Activated CD8-positive, alpha-beta T cell treated with anti-CD3 and anti-CD28 coated beads, Interleukin-2, amount 10 ng/mL, durations not matched to agents 7 days and 5 days (primary cell): ENCODE measurements at regions of chr11 and their contacts with region 1.

Region 1: DNA sequence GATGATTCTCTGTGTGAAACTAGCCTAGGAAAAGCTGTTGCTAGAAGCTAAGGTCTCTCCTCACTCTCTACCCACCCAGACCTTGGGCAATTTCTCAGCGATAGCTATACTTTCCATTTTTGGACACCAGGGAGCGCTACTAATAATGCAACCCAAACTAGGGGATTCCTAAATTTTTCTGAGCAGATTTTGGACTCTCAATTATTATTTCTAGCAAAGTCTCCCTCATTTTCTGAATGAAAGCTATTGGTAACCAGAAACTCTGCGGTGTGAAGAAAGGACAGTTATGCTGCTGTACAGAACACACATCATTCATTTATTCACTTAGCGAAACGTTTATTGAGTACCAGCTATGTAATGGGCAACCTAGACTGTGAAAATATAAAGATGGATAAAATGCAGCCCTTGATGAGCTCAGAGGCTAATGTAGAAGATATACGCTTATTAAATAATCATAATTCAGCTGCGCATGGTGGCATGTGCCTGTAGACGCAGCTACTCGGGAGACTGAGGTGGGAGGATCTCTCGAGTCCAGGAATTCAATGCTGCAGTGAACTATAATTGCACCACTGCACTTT is 6.1 kb upstream of the STIM1 start:
- DNase-seq: peak; percentile 68
- ATAC-seq: peak; percentile 61
- H3K4me3 Mint-ChIP-seq: no peak overlapping the region
- H3K27ac Mint-ChIP-seq: no peak overlapping the region
- H3K4me1 Mint-ChIP-seq: peaks cover 49% of the 10 kb centered on the region
- H3K27me3 Mint-ChIP-seq: no peaks in the 10 kb centered on the region

Region 2: GRCh38 chr11:3824714-3825472 is 24.5 kb before region 1 on chr11:
- CTCF ChIA-PET with region 1: interaction called, 458 read pairs
- POLR2A ChIA-PET with region 1: interaction called, 4 read pairs
- DNase-seq: peak; percentile 87
- ATAC-seq: peak; percentile 93
- H3K4me3 Mint-ChIP-seq: no peak overlapping the region
- H3K27ac Mint-ChIP-seq: peak overlapping the region; percentile 46
- H3K4me1 Mint-ChIP-seq: peaks cover 38% of the 10 kb centered on the region
- H3K27me3 Mint-ChIP-seq: no peaks in the 10 kb centered on the region

Region 3: GRCh38 chr11:3880724-3881123 is 31.3 kb after region 1 on chr11:
- CTCF ChIA-PET with region 1: interaction called, 27 read pairs
- POLR2A ChIA-PET with region 1: interaction called, 10 read pairs
- DNase-seq: no peak
- ATAC-seq: no peak
- H3K4me3 Mint-ChIP-seq: no peak overlapping the region
- H3K27ac Mint-ChIP-seq: peak overlapping the region; percentile 73
- H3K4me1 Mint-ChIP-seq: peaks cover 69% of the 10 kb centered on the region
- H3K27me3 Mint-ChIP-seq: no peaks in the 10 kb centered on the region

Region 4: DNA sequence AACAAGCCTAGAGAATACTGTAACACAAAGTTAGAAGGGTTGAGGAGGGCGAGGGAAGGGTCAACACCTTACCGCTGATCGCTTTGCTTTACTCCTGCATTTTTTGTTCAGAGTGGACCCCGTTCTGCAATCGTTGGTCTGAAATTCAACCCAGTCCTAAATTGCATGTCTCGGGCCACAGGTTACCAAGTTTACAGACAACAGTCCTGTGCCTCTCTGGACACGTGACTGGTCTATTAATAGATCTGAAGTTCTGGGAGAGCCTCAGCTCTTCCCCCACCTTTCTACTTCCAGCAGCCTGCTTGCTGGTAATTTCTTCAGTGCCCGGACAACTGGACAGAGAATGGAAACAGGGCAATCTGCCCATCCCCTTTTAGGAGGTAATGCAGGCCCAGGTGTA is 80.3 kb after region 1 on chr11:
- CTCF ChIA-PET with region 1: interaction called, 15 read pairs
- POLR2A ChIA-PET with region 1: interaction called, 3 read pairs
- DNase-seq: no peak
- ATAC-seq: no peak
- H3K4me3 Mint-ChIP-seq: no peak overlapping the region
- H3K27ac Mint-ChIP-seq: peak overlapping the region; percentile 18
- H3K4me1 Mint-ChIP-seq: peaks cover 38% of the 10 kb centered on the region
- H3K27me3 Mint-ChIP-seq: no peaks in the 10 kb centered on the region

Region 5: GRCh38 chr11:3971756-3972404 is 122.5 kb after region 1 on chr11:
- CTCF ChIA-PET with region 1: interaction called, 37 read pairs
- POLR2A ChIA-PET with region 1: interaction called, 3 read pairs
- DNase-seq: no peak
- ATAC-seq: no peak
- H3K4me3 Mint-ChIP-seq: no peak overlapping the region
- H3K27ac Mint-ChIP-seq: no peak overlapping the region
- H3K4me1 Mint-ChIP-seq: peaks cover 53% of the 10 kb centered on the region
- H3K27me3 Mint-ChIP-seq: no peaks in the 10 kb centered on the region

Region 6: GRCh38 chr11:4060182-4060923 is 211.0 kb after region 1 on chr11:
- CTCF ChIA-PET with region 1: interaction called, 630 read pairs
- POLR2A ChIA-PET with region 1: interaction called, 3 read pairs
- DNase-seq: no peak
- ATAC-seq: no peak
- H3K4me3 Mint-ChIP-seq: no peak overlapping the region
- H3K27ac Mint-ChIP-seq: no peak overlapping the region
- H3K4me1 Mint-ChIP-seq: peaks cover 38% of the 10 kb centered on the region
- H3K27me3 Mint-ChIP-seq: no peaks in the 10 kb centered on the region